Endothelial cell of umbilical vein (primary cell): ENCODE measurements at regions of chr6 and their contacts with region 1.

Region 1: GRCh38 chr6:7725849-7726415 is at the start of gene BMP6:
- DNase-seq: peak; percentile 95
- H3K4me3 ChIP-seq: peak within 1 kb of the TSS; percentile 70 to 94 (median 73)
- H3K27ac ChIP-seq: peak within 1 kb of the TSS; percentile 59
- H3K4me1 ChIP-seq: peaks cover 30% of the 10 kb centered on the region
- H3K27me3 ChIP-seq: no peaks in the 10 kb centered on the region
- CTCF ChIP-seq: peak in 1 of 2 donors; percentile 6
- POLR2A ChIP-seq: peak; percentile 99
- total RNA-seq, gene BMP6: 221 and 234 TPM in 2 replicates

Region 2: GRCh38 chr6:7424967-7425807 is 300.7 kb before region 1 on chr6:
- CTCF ChIA-PET with region 1: no interaction called
- POLR2A ChIA-PET with region 1: no interaction called
- dilution Hi-C with region 1: no loop called
- intact Hi-C with region 1: no loop called
- DNase-seq: peak; percentile 6
- H3K4me3 ChIP-seq: no peak overlapping the region
- H3K27ac ChIP-seq: no peak overlapping the region
- H3K4me1 ChIP-seq: no peaks in the 10 kb centered on the region
- H3K27me3 ChIP-seq: no peaks in the 10 kb centered on the region
- CTCF ChIP-seq: peak in 1 of 2 donors; percentile 12
- POLR2A ChIP-seq: no peak

Region 3: GRCh38 chr6:7568021-7568420 is 157.9 kb before region 1 on chr6:
- CTCF ChIA-PET with region 1: no interaction called
- POLR2A ChIA-PET with region 1: no interaction called
- dilution Hi-C with region 1: no loop called
- intact Hi-C with region 1: no loop called
- DNase-seq: no peak
- H3K4me3 ChIP-seq: no peak overlapping the region
- H3K27ac ChIP-seq: no peak overlapping the region
- H3K4me1 ChIP-seq: no peaks in the 10 kb centered on the region
- H3K27me3 ChIP-seq: peaks cover 0 to 3% of the 10 kb centered on the region in 2 experiments
- CTCF ChIP-seq: no peak
- POLR2A ChIP-seq: no peak

Region 4: DNA sequence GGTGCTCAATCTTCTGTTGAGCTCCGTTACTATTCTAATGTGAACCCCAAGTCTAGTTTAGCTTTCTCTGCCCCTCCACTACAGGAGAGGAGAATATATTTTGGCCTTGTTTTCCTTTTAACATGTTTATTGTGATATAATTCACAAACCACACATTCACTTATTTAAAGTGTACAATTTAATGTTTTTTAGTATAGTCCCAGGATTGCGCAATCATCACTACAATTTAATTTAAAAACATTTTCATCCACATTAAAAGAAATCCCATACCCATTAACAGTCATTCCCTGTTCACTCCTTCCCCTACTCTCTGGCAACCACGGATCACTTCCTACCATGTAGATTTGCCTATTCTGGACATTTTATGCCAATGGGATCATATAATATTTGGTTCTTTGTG is 64.6 kb before region 1 on chr6:
- CTCF ChIA-PET with region 1: no interaction called
- POLR2A ChIA-PET with region 1: no interaction called
- dilution Hi-C with region 1: no loop called
- intact Hi-C with region 1: no loop called
- DNase-seq: no peak
- H3K4me3 ChIP-seq: no peak overlapping the region
- H3K27ac ChIP-seq: no peak overlapping the region
- H3K4me1 ChIP-seq: no peaks in the 10 kb centered on the region
- H3K27me3 ChIP-seq: peaks cover 6 to 12% of the 10 kb centered on the region in 2 experiments
- CTCF ChIP-seq: no peak
- POLR2A ChIP-seq: no peak

Region 5: GRCh38 chr6:7747016-7747415 is 21.1 kb after region 1 on chr6:
- CTCF ChIA-PET with region 1: interaction called, 12 read pairs
- POLR2A ChIA-PET with region 1: no interaction called
- dilution Hi-C with region 1: no loop called
- intact Hi-C with region 1: no loop called
- DNase-seq: no peak
- H3K4me3 ChIP-seq: no peak overlapping the region
- H3K27ac ChIP-seq: no peak overlapping the region
- H3K4me1 ChIP-seq: peaks cover 45% of the 10 kb centered on the region
- H3K27me3 ChIP-seq: no peaks in the 10 kb centered on the region
- CTCF ChIP-seq: no peak
- POLR2A ChIP-seq: no peak

Region 6: GRCh38 chr6:7878401-7878964 is 152.6 kb after region 1 on chr6:
- CTCF ChIA-PET with region 1: interaction called, 17 read pairs
- POLR2A ChIA-PET with region 1: no interaction called
- dilution Hi-C with region 1: no loop called
- intact Hi-C with region 1: no loop called
- DNase-seq: peak; percentile 48
- H3K4me3 ChIP-seq: no peak overlapping the region
- H3K27ac ChIP-seq: no peak overlapping the region
- H3K4me1 ChIP-seq: peaks cover 14% of the 10 kb centered on the region
- H3K27me3 ChIP-seq: no peaks in the 10 kb centered on the region
- CTCF ChIP-seq: no peak
- POLR2A ChIP-seq: peak; percentile 45

Region 7: GRCh38 chr6:7910654-7911344 is 184.9 kb after region 1 on chr6 and contains the start of gene TXNDC5:
- CTCF ChIA-PET with region 1: interaction called, 4 read pairs
- POLR2A ChIA-PET with region 1: interaction called, 3 read pairs
- dilution Hi-C with region 1: no loop called
- intact Hi-C with region 1: loop called (anchors 2 kb)
- DNase-seq: peak; percentile 77
- H3K4me3 ChIP-seq: peak within 1 kb of the TSS; percentile 70 to 97 (median 76)
- H3K27ac ChIP-seq: peak within 1 kb of the TSS; percentile 94
- H3K4me1 ChIP-seq: peaks cover 45% of the 10 kb centered on the region
- H3K27me3 ChIP-seq: no peaks in the 10 kb centered on the region
- CTCF ChIP-seq: no peak
- POLR2A ChIP-seq: peak; percentile 76
- total RNA-seq, gene TXNDC5: 1,581 and 1,665 TPM in 2 replicates

Region 8: GRCh38 chr6:8000188-8000596 is 274.3 kb after region 1 on chr6:
- CTCF ChIA-PET with region 1: interaction called, 140 read pairs
- POLR2A ChIA-PET with region 1: interaction called, 9 read pairs
- dilution Hi-C with region 1: no loop called
- intact Hi-C with region 1: loop called (anchors 1 kb)
- DNase-seq: peak; percentile 99
- H3K4me3 ChIP-seq: no peak overlapping the region
- H3K27ac ChIP-seq: peak overlapping the region; percentile 96
- H3K4me1 ChIP-seq: peaks cover 89% of the 10 kb centered on the region
- H3K27me3 ChIP-seq: no peaks in the 10 kb centered on the region
- CTCF ChIP-seq: no peak
- POLR2A ChIP-seq: peak; percentile 87

Region 9: GRCh38 chr6:8219352-8219943 is 493.5 kb after region 1 on chr6:
- CTCF ChIA-PET with region 1: interaction called, 24 read pairs
- POLR2A ChIA-PET with region 1: no interaction called
- dilution Hi-C with region 1: no loop called
- intact Hi-C with region 1: loop called (anchors 2 kb)
- DNase-seq: peak; percentile 62
- H3K4me3 ChIP-seq: no peak overlapping the region
- H3K27ac ChIP-seq: no peak overlapping the region
- H3K4me1 ChIP-seq: no peaks in the 10 kb centered on the region
- H3K27me3 ChIP-seq: peaks cover 0 to 8% of the 10 kb centered on the region in 2 experiments
- CTCF ChIP-seq: peak; percentile 57 to 62
- POLR2A ChIP-seq: no peak